ENCODE measurements at regions of chr5 and their contacts with region 1.

Region 1: GRCh38 chr5:107594253-107595045 is 76.3 kb downstream of the EFNA5 start:
- DNase-seq: no peak
- H3K4me3 ChIP-seq: no peak overlapping the region
- H3K27ac ChIP-seq: peak overlapping the region; percentile 14; the same call in 1 of the 2 replicates
- H3K4me1 ChIP-seq: peaks cover 9% of the 10 kb centered on the region
- H3K27me3 ChIP-seq: no peaks in the 10 kb centered on the region
- CTCF ChIP-seq: no peak

Region 2: GRCh38 chr5:107652839-107653607 is 58.6 kb after region 1 on chr5:
- CTCF ChIA-PET with region 1: no interaction called
- POLR2A ChIA-PET with region 1: no interaction called
- intact Hi-C with region 1: loop called (anchors 5 kb)
- DNase-seq: no peak
- H3K4me3 ChIP-seq: no peak overlapping the region
- H3K27ac ChIP-seq: no peak overlapping the region
- H3K4me1 ChIP-seq: peaks cover 23% of the 10 kb centered on the region
- H3K27me3 ChIP-seq: no peaks in the 10 kb centered on the region
- CTCF ChIP-seq: no peak